ENCODE measurements at regions of chr20 and their contacts with region 1.

Region 1: GRCh38 chr20:33233129-33233774 is 2.5 kb upstream of the BPIFA1 start:
- DNase-seq: peak; percentile 27
- H3K4me3 Mint-ChIP-seq: no peak overlapping the region
- H3K27ac Mint-ChIP-seq: no peak overlapping the region
- H3K4me1 Mint-ChIP-seq: no peaks in the 10 kb centered on the region
- H3K27me3 Mint-ChIP-seq: peaks cover 95% of the 10 kb centered on the region
- CTCF ChIP-seq: no peak

Region 2: GRCh38 chr20:32674362-32674789 is 558.9 kb before region 1 on chr20:
- CTCF ChIA-PET with region 1: interaction called, 11 read pairs
- intact Hi-C with region 1: no loop called
- DNase-seq: peak; percentile 83
- H3K4me3 Mint-ChIP-seq: no peak overlapping the region
- H3K27ac Mint-ChIP-seq: no peak overlapping the region
- H3K4me1 Mint-ChIP-seq: no peaks in the 10 kb centered on the region
- H3K27me3 Mint-ChIP-seq: no peaks in the 10 kb centered on the region
- CTCF ChIP-seq: peak; percentile 88

Region 3: GRCh38 chr20:32999603-33000250 is 233.5 kb before region 1 on chr20:
- CTCF ChIA-PET with region 1: no interaction called
- intact Hi-C with region 1: no loop called
- DNase-seq: no peak
- H3K4me3 Mint-ChIP-seq: no peak overlapping the region
- H3K27ac Mint-ChIP-seq: no peak overlapping the region
- H3K4me1 Mint-ChIP-seq: no peaks in the 10 kb centered on the region
- H3K27me3 Mint-ChIP-seq: peaks cover 81% of the 10 kb centered on the region
- CTCF ChIP-seq: no peak

Region 4: GRCh38 chr20:33291830-33292355 is 58.6 kb after region 1 on chr20:
- CTCF ChIA-PET with region 1: interaction called, 3 read pairs
- intact Hi-C with region 1: loop called (anchors 2 kb)
- DNase-seq: peak; percentile 86
- H3K4me3 Mint-ChIP-seq: no peak overlapping the region
- H3K27ac Mint-ChIP-seq: no peak overlapping the region
- H3K4me1 Mint-ChIP-seq: peaks cover 8% of the 10 kb centered on the region
- H3K27me3 Mint-ChIP-seq: peaks cover 23% of the 10 kb centered on the region
- CTCF ChIP-seq: peak; percentile 100